Aorta (tissue), 5 donors: ENCODE measurements at regions of chr18 and their contacts with region 1.

Region 1: DNA sequence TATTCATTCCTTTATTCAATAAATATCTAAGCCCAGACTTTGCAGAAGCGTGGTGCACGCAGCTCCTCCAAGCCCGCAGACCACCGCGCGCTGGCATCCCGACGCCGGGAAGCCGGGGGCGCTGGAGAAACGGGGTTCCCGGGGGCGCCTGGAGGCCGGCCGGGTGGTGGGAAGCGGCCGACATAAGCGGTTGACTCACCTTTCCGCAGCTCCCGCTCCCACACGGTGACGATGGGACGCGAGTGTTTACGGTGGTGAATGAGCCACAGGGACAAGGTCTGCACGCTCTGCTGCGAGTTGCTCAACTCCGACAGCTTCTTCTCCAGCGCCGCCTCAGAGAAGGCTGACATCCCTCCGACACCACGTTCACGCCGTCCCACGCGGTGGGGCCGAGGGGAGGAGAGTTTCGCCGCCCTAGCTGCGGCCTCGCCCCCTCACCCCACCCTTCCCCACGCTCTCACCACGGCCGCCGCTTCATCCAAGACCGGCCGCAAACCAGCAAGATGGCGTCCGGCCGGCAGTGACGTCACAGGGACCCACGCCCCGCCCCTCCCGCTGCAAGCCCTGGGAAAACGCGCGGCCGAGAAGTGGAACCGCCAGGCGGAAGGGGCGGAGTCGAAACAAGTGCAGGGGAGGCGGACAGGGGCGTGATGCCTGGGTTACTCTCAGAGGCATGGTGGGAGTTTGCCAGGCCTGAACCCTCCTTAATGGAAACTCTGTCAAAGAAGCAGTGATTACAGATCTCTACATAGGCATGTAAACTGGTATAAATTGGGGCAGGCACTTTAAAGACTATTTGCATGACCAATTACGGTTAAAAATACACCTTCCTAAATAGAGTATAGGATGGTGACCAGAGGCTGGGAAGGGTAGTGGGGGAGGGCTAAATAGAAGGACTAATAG is at the start of gene RPRD1A:
- DNase-seq: peak; percentile 98 to 100
- ATAC-seq: peak; percentile 99
- H3K4me3 ChIP-seq: peak within 1 kb of the TSS; percentile 36 to 81
- H3K27ac ChIP-seq: peak within 1 kb of the TSS; percentile 29 to 89
- H3K4me1 ChIP-seq: no peaks in the 10 kb centered on the region
- H3K27me3 ChIP-seq: no peaks in the 10 kb centered on the region
- total RNA-seq, gene RPRD1A: 45.1 to 49.5 TPM

Region 2: DNA sequence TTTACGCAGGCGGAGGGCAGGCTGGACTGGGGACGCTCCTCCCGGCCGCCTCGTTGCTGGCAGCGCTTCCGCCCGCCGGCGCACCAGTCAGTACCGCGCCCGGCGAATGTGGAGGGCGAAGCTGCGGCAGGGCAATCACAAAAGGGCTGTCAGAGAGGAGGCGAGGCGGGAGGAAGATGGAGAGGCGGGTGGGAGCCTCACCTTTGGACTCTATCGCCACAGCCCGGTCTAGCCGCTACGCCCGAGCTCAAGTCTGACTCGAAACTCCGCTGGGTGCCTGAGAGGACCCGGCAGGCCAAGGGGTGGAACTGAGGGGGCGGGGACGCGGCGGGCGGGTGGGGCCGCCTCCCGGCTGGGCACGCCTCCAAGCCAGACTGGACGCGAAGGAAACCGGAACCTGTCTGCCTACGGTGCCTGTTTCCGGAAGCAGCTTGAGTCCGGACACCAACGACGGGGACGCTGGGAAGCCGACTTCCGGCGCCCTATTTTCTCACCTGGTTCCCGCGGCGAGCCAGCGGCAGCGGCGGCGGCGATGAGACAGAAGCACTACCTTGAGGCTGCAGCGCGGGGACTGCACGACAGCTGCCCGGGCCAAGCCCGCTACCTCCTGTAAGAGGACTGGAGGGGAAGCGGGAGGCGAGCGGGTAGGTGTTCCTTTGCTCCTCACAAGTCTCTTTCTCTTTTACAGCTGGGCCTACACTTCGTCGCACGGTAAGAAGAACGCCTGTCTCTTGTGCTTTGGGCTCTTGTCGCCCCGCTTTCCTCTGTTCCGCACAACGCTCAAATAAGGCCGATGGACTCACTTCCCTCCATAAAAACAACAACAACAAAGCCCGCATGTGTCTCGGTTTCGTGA is 94.9 kb before region 1 on chr18 and contains the start of gene RMP24:
- intact Hi-C with region 1: loop called in 1 of 2 experiments (anchors 5 kb)
- DNase-seq: peak; percentile 95 to 97
- ATAC-seq: peak; percentile 98
- H3K4me3 ChIP-seq: peak within 1 kb of the TSS; percentile 81 to 87
- H3K27ac ChIP-seq: peak within 1 kb of the TSS; percentile 59 to 96
- H3K4me1 ChIP-seq: peaks cover 0 to 6% of the 10 kb centered on the region in 2 donors
- H3K27me3 ChIP-seq: no peaks in the 10 kb centered on the region

Region 3: DNA sequence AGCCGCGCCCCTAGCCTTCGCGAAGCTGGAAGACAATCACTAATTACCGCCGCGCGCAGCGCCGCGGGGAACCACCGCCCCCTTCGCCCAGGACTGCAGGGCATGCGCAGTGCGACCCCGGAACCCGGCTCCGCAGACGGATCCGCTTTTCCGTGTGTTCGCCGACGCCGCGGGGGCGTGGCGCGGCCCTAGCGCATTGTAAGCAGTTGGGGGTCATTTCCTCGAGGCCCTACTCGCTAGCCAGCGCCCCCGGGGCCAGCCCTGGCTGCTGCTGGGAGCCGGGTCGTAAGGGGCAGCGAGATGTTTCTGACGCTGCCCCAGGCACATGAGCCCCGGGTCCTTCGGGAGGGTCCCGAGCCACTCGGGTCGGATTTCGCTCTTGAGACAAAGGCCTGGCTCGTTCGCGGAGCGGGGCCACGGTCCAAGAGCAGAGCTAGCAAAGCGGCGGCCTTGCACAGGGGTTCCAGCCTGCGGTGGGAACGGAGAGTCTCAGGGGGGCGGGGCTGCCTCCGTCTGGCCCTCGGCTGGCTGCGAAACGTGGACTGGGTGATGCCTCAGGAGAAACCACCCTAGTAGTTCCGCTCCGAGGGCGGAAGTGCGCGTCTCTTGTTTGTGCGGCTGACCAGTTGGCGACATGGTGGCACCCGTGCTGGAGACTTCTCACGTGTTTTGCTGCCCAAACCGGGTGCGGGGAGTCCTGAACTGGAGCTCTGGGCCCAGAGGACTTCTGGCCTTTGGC is 62.2 kb after region 1 on chr18 and contains the starts of genes ELP2 and SLC39A6:
- intact Hi-C with region 1: loop called in 1 of 2 experiments (anchors 2 kb)
- DNase-seq: peak; percentile 98
- ATAC-seq: peak; percentile 99
- H3K4me3 ChIP-seq: peak within 1 kb of the TSS; percentile 58 to 71
- H3K27ac ChIP-seq: peak within 1 kb of the TSS; percentile 81 to 89
- H3K4me1 ChIP-seq: peaks cover 0 to 2% of the 10 kb centered on the region in 2 donors
- H3K27me3 ChIP-seq: no peaks in the 10 kb centered on the region
- total RNA-seq, gene ELP2: 62.6 to 84.3 TPM
- total RNA-seq, gene SLC39A6: 29.6 to 39.4 TPM